Dendritic cell treated with granulocyte-macrophage colony-stimulating factor and Interleukin-4, amounts not matched to agents 40 ng/mL and 50 ng/mL, for 4 days (primary cell): ENCODE measurements at regions of chr18 and their contacts with region 1.

Region 1: GRCh38 chr18:7429831-7430230 is 137.3 kb upstream of the PTPRM start:
- H3K4me3 Mint-ChIP-seq: no peak overlapping the region
- H3K27ac Mint-ChIP-seq: no peak overlapping the region
- H3K4me1 Mint-ChIP-seq: no peaks in the 10 kb centered on the region
- H3K27me3 Mint-ChIP-seq: no peaks in the 10 kb centered on the region

Region 2: GRCh38 chr18:7394050-7394659 is 35.7 kb before region 1 on chr18:
- intact Hi-C with region 1: loop called (anchors 5 kb)
- H3K4me3 Mint-ChIP-seq: no peak overlapping the region
- H3K27ac Mint-ChIP-seq: no peak overlapping the region
- H3K4me1 Mint-ChIP-seq: no peaks in the 10 kb centered on the region
- H3K27me3 Mint-ChIP-seq: no peaks in the 10 kb centered on the region